ENCODE measurements at regions of chrX and their contacts with region 1.

Region 1: GRCh38 chrX:13658602-13659001 is 5.7 kb downstream of the TCEANC start:
- DNase-seq: no peak
- H3K4me3 ChIP-seq: no peak overlapping the region
- H3K27ac ChIP-seq: peak overlapping the region; percentile 19 to 69 (median 61)
- H3K4me1 ChIP-seq: peaks cover 0 to 40% (median 6%) of the 10 kb centered on the region in 4 donors
- H3K27me3 ChIP-seq: no peaks in the 10 kb centered on the region
- CTCF ChIP-seq: peak; percentile 44 to 62 (median 56)
- EP300 ChIP-seq: no peak
- POLR2A ChIP-seq: no peak

Region 2: GRCh38 chrX:13688958-13689740 is 30.5 kb after region 1 on chrX and contains the start of gene RAB9A:
- intact Hi-C with region 1: loop called (anchors 5 kb)
- DNase-seq: peak; percentile 92
- H3K4me3 ChIP-seq: peak within 1 kb of the TSS; percentile 66 to 74 (median 69)
- H3K27ac ChIP-seq: peak within 1 kb of the TSS; percentile 91 to 94 (median 93)
- H3K4me1 ChIP-seq: peaks cover 0 to 35% (median 20%) of the 10 kb centered on the region in 4 donors
- H3K27me3 ChIP-seq: peaks cover 0 to 4% (median 0%) of the 10 kb centered on the region in 3 donors
- CTCF ChIP-seq: no peak
- EP300 ChIP-seq: no peak
- POLR2A ChIP-seq: peak; percentile 85 to 87
- total RNA-seq, gene RAB9A: 11.8 to 28.6 (median 24.4) TPM

Region 3: DNA sequence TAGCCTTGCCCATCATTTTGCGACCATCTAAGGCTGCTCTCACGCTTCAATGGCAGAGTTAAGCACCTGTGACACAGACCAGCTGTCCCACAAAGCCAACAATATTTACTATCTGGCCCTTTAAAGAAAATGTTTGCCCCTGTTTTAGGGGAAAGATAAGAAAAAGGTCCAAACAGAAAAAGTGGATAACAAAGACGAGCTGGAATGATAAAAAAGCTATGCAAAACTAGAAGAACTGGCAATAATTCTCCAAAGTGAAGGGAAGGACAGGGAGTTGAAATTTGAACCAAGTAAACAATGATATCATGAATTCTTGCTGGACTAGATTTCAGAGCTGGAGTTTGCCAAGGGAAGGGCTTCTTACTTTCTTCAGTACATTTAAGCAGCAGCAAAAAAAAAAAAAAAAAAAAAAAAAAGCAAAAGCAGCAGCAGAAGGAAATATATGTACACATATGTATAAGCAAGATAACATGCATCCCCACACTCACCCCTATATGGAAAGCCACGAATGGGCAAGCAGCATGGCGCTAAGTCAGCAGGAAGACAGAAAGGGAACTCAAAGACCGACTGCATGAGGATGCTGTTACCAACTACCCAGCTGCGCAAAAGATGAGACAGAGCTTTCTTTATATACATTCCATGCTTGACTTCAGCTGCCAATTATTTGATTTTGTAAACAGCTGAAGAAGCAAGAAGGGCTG is 63.4 kb after region 1 on chrX:
- intact Hi-C with region 1: no loop called
- DNase-seq: no peak
- H3K4me3 ChIP-seq: no peak overlapping the region
- H3K27ac ChIP-seq: peak overlapping the region; percentile 47 to 82 (median 64)
- H3K4me1 ChIP-seq: peaks cover 0 to 24% (median 14%) of the 10 kb centered on the region in 4 donors
- H3K27me3 ChIP-seq: no peaks in the 10 kb centered on the region
- CTCF ChIP-seq: no peak
- EP300 ChIP-seq: no peak
- POLR2A ChIP-seq: no peak

Region 4: GRCh38 chrX:13734278-13735172 is 75.9 kb after region 1 on chrX and contains the starts of genes OFD1 and TRAPPC2:
- intact Hi-C with region 1: loop called (anchors 2 kb)
- DNase-seq: peak; percentile 96
- H3K4me3 ChIP-seq: peak within 1 kb of the TSS; percentile 69 to 90 (median 78)
- H3K27ac ChIP-seq: peak within 1 kb of the TSS; percentile 90 to 95 (median 92)
- H3K4me1 ChIP-seq: peaks cover 0 to 23% (median 8%) of the 10 kb centered on the region in 4 donors
- H3K27me3 ChIP-seq: peaks cover 0 to 5% (median 0%) of the 10 kb centered on the region in 3 donors
- CTCF ChIP-seq: no peak
- EP300 ChIP-seq: peak in 1 of 4 donors; percentile 31
- POLR2A ChIP-seq: peak; percentile 90 to 93
- total RNA-seq, gene OFD1: 12.8 to 46.0 (median 15.1) TPM
- total RNA-seq, gene TRAPPC2: 20.1 to 22.8 (median 22.4) TPM

Region 5: GRCh38 chrX:13750204-13750603 is 91.6 kb after region 1 on chrX:
- intact Hi-C with region 1: loop called (anchors 2 kb)
- DNase-seq: no peak
- H3K4me3 ChIP-seq: no peak overlapping the region
- H3K27ac ChIP-seq: no peak overlapping the region
- H3K4me1 ChIP-seq: no peaks in the 10 kb centered on the region
- H3K27me3 ChIP-seq: no peaks in the 10 kb centered on the region
- CTCF ChIP-seq: peak in 3 of 4 experiments; percentile 14 to 42 (median 22)
- EP300 ChIP-seq: no peak
- POLR2A ChIP-seq: no peak